ENCODE measurements at regions of chr17 and their contacts with region 1.

Region 1: GRCh38 chr17:57987580-57988421 is at the start of gene VEZF1:
- DNase-seq: peak; percentile 89
- H3K4me3 ChIP-seq: peak within 1 kb of the TSS; percentile 77
- H3K27ac ChIP-seq: peak within 1 kb of the TSS; percentile 56
- H3K4me1 ChIP-seq: peaks cover 23% of the 10 kb centered on the region
- CTCF ChIP-seq: no peak
- total RNA-seq, gene VEZF1: 19.0 and 22.6 TPM in 2 replicates

Region 2: GRCh38 chr17:57849874-57850754 is 137.7 kb before region 1 on chr17 and contains the start of gene MRPS23:
- CTCF ChIA-PET with region 1: no interaction called
- POLR2A ChIA-PET with region 1: interaction called, 3 read pairs
- intact Hi-C with region 1: loop called (anchors 2 kb)
- DNase-seq: peak; percentile 98
- H3K4me3 ChIP-seq: peak within 1 kb of the TSS; percentile 96
- H3K27ac ChIP-seq: peak within 1 kb of the TSS; percentile 45
- H3K4me1 ChIP-seq: peaks cover 23% of the 10 kb centered on the region
- CTCF ChIP-seq: no peak
- total RNA-seq, gene MRPS23: 46.3 and 50.3 TPM in 2 replicates

Region 3: GRCh38 chr17:57902800-57903759 is 84.7 kb before region 1 on chr17:
- CTCF ChIA-PET with region 1: interaction called, 6 read pairs
- POLR2A ChIA-PET with region 1: interaction called, 5 read pairs
- intact Hi-C with region 1: loop called (anchors 5 kb)
- DNase-seq: peak; percentile 91
- H3K4me3 ChIP-seq: peak overlapping the region; percentile 33
- H3K27ac ChIP-seq: peak overlapping the region; percentile 60
- H3K4me1 ChIP-seq: peaks cover 53% of the 10 kb centered on the region
- CTCF ChIP-seq: no peak

Region 4: DNA sequence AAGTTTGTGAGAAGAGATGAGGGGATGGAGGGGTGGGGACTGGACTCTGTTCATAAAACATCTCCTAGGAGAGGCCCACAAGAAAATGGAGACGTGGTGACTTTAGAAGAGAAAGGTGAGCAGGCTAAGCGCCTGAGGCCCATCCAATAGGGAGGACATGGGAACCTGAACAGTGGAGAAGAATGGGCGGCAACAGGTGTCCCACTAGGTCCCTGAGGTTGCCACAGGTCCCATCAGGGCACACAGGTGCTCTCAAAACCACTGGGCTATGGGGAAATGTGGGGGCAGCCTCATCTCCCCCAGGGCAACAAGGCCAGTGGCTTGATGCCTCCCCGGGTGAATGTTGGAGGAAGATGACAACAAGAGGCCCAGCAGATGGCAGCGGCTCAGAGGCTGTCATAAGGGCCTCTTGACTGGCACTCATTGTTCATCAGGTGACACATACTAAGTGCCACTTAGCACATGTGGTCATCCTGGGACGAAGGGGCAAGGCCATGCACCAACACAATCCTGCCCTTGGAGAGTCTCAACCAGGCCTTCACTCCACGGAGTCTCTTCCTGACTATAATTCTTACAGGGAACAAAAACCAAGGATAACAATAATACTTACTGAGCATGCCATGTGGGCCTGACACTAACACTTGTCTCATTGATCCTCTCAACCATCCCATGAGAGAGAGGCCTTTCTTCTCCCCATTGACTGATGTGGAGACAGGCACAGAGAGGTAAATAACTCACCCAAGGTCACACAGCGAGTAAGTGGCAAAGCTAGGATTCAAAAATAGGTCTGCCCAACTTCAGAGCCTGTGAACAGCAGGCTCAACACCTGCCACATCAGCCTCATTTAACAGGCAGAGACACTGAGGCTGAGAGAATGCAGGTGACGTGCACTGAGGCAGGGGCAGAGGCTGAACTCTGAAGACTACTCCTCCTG is 70.6 kb before region 1 on chr17:
- CTCF ChIA-PET with region 1: no interaction called
- POLR2A ChIA-PET with region 1: no interaction called
- intact Hi-C with region 1: no loop called
- DNase-seq: no peak
- H3K4me3 ChIP-seq: no peak overlapping the region
- H3K27ac ChIP-seq: no peak overlapping the region
- H3K4me1 ChIP-seq: peaks cover 7% of the 10 kb centered on the region
- CTCF ChIP-seq: no peak